ENCODE measurements at regions of chr2 and their contacts with region 1.

Region 1: GRCh38 chr2:158745044-158745865 is 49.9 kb upstream of the DAPL1 start:
- DNase-seq: peak; percentile 50
- H3K4me3 Mint-ChIP-seq: no peak overlapping the region
- H3K27ac Mint-ChIP-seq: no peak overlapping the region
- H3K4me1 Mint-ChIP-seq: no peaks in the 10 kb centered on the region
- H3K27me3 Mint-ChIP-seq: peaks cover 28% of the 10 kb centered on the region

Region 2: DNA sequence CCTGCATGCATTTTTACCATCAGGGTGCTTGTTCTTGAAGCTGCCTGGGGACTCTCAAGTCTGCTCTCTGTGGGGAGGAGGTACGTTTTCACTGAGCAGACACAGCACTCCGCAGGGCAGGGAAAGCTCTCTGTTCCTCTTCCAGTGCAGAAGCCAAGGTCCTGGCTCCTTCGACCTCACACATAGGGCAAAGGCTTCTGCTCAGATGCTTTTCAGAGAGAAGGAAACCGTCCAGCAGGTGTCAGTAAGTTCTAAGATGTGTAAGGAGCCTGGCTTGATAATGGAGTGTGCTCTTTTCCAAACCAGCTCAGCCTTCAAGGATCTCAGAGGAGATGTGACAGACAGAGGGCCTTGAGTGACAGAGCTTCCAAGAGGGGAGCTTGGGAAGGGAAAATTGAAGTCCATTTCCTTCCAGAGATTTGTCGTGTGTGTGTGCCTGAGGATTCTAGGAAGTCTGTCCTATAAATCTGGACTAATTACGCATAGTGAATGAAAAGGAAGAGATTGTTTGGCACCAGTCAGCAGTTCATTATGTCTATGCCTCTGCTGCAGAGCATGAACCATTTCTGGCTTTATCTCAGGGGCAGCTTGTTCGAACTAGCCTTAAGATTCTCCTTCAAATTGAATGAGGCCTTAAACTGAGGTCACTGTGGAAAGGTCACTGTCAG is 710.9 kb before region 1 on chr2:
- CTCF ChIA-PET with region 1: interaction called, 67 read pairs
- DNase-seq: peak; percentile 42
- H3K4me3 Mint-ChIP-seq: no peak overlapping the region
- H3K27ac Mint-ChIP-seq: no peak overlapping the region
- H3K4me1 Mint-ChIP-seq: no peaks in the 10 kb centered on the region
- H3K27me3 Mint-ChIP-seq: peaks cover 27% of the 10 kb centered on the region

Region 3: DNA sequence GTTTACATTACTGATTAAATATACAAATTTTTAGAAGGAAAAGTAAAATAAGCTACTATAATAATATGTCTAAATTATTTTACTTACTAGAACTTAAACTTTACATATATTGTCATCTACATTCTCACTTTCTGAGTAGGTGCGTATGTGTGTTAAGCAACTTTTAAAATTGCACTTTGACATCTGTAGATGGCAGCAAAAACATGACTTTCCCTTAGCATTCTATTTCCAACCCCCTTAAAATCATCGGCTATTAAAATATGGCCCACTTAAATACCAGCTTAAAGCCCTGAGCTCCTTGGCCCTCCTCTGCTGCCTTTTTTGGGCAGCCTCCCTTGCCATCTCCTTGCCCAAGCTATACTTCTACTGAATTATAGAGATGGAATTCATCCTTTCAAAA is 565.6 kb before region 1 on chr2:
- CTCF ChIA-PET with region 1: interaction called, 41 read pairs
- DNase-seq: no peak
- H3K4me3 Mint-ChIP-seq: no peak overlapping the region
- H3K27ac Mint-ChIP-seq: no peak overlapping the region
- H3K4me1 Mint-ChIP-seq: no peaks in the 10 kb centered on the region
- H3K27me3 Mint-ChIP-seq: peaks cover 20% of the 10 kb centered on the region

Region 4: GRCh38 chr2:158518075-158518474 is 227.2 kb before region 1 on chr2:
- CTCF ChIA-PET with region 1: no interaction called
- DNase-seq: no peak
- H3K4me3 Mint-ChIP-seq: no peak overlapping the region
- H3K27ac Mint-ChIP-seq: no peak overlapping the region
- H3K4me1 Mint-ChIP-seq: no peaks in the 10 kb centered on the region
- H3K27me3 Mint-ChIP-seq: no peaks in the 10 kb centered on the region

Region 5: DNA sequence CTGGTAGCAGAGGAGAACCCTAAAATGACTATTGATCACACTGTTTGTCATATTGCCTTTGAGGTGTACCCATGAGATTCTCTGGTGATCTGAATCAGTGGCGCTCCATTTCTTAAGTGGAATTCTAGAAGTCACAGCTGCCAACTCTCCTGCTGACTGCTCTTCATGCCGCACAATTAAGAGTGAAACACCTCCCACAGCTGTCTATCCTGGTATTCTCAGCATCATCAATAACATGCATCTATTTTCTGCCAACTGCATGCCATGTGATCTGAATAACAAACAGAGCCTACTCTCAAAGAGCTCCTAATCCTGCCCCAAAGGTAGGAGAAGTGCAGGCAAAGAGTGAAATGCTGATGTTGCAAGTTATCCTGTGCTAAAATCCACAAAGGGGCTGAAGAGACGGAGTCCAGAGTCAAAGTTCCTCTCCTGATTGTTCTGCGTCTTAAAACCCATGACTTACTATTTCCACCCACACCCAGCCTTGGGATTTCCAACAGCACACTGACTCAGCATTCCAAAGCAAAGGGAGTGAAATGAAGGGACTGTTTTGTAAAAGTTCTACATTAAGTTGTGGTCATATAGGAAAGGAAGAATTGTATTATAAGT is 36.2 kb after region 1 on chr2:
- CTCF ChIA-PET with region 1: no interaction called
- DNase-seq: no peak
- H3K4me3 Mint-ChIP-seq: no peak overlapping the region
- H3K27ac Mint-ChIP-seq: no peak overlapping the region
- H3K4me1 Mint-ChIP-seq: no peaks in the 10 kb centered on the region
- H3K27me3 Mint-ChIP-seq: no peaks in the 10 kb centered on the region

Region 6: DNA sequence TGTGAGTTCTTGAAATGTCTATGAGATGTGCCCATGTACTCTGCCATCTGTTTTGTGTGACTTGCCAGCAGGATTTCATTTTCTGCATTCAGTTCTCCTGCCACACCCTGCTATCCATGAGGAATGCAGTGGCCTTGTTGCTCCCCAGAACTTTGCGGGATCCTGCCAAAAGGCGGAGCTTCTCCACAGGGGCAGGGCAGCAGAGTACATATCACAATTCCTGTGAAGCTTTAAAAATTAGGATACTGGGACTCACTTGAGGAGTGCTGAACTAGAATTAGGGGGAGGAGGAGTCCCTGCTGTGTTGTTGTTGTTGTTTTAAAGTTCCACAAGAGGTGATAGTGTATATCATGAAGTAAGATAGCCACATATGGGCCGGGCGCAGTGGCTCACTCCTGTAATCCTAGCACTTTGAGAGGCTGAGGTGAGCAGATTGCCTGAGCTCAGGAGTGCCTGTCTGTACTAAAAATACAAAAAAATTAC is 299.6 kb after region 1 on chr2:
- CTCF ChIA-PET with region 1: no interaction called
- DNase-seq: no peak
- H3K4me3 Mint-ChIP-seq: no peak overlapping the region
- H3K27ac Mint-ChIP-seq: no peak overlapping the region
- H3K4me1 Mint-ChIP-seq: no peaks in the 10 kb centered on the region
- H3K27me3 Mint-ChIP-seq: peaks cover 8% of the 10 kb centered on the region

Measured in activated naive CD4-positive, alpha-beta T cell treated with anti-CD3 and anti-CD28 coated beads, Interleukin-2, amount 10 ng/mL, durations not matched to agents 7 days and 5 days (primary cell).